Ovary (tissue), 10 donors: ENCODE measurements at regions of chr21 and their contacts with region 1.

Region 1: DNA sequence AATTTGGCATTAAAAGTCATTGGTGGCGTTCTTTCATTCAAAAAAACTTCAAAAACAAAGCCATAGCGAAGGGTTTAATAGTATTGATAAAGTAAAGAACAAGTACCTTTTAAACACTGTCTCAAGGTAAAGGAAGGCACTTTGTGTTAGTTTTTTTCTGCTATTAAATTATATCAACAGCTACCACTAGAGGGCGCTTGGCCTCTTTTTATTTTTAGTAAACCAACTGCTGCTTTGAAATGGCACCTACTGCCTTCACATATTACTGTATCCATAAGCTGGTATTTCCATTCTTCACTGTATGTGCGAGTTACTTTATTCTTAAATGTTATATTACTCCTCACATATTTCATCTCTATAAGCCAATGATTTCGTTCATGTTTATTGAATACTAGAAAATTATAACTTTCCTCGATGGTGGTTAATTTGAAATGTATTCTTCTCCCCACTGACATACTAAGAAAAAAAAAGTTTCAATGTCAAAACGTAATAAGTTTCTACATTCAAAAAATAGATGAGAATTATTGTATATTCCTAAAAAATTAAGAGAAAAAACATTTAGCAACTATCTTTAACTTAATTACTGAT is 125.7 kb upstream of the CXADR start:
- DNase-seq: peak in 4 of 5 donors; percentile 12 to 49 (median 24)
- H3K4me3 ChIP-seq: no peak overlapping the region
- H3K27ac ChIP-seq: no peak overlapping the region
- H3K4me1 ChIP-seq: no peaks in the 10 kb centered on the region
- H3K27me3 ChIP-seq: no peaks in the 10 kb centered on the region
- CTCF ChIP-seq: peak; percentile 51 to 78 (median 76)
- EP300 ChIP-seq: no peak
- POLR2A ChIP-seq: no peak

Region 2: DNA sequence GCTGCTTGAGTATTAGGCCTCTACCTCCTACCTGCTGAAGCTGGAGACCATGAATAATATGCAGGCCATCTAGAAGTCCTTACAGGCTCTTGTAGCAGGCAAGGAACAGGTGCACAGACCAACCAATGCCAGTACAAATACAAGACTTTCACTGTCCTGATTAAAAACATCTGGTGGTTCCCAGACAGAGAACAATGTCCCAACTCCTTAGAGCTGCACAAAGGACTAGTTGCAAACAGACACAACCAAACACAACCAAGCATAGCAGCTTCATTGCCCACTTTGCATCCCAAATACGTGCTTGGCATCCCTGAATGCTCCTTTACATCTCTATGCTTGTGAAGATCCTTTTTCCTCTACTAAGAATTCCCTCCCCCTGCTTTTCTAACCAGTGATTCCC is 27.6 kb after region 1 on chr21:
- intact Hi-C with region 1: loop called in 1 of 4 experiments (anchors 1 kb)
- DNase-seq: no peak
- H3K4me3 ChIP-seq: no peak overlapping the region
- H3K27ac ChIP-seq: no peak overlapping the region
- H3K4me1 ChIP-seq: no peaks in the 10 kb centered on the region
- H3K27me3 ChIP-seq: no peaks in the 10 kb centered on the region
- CTCF ChIP-seq: no peak
- EP300 ChIP-seq: no peak
- POLR2A ChIP-seq: no peak